ENCODE measurements at regions of chr5 and their contacts with region 1.

Region 1: GRCh38 chr5:105730982-105731381 is 1939.8 kb downstream of the EFNA5 start:
- DNase-seq: no peak
- H3K4me3 ChIP-seq: no peak overlapping the region
- H3K27ac ChIP-seq: no peak overlapping the region
- H3K4me1 ChIP-seq: no peaks in the 10 kb centered on the region
- H3K27me3 ChIP-seq: no peaks in the 10 kb centered on the region
- CTCF ChIP-seq: no peak
- POLR2A ChIP-seq: no peak

Region 2: DNA sequence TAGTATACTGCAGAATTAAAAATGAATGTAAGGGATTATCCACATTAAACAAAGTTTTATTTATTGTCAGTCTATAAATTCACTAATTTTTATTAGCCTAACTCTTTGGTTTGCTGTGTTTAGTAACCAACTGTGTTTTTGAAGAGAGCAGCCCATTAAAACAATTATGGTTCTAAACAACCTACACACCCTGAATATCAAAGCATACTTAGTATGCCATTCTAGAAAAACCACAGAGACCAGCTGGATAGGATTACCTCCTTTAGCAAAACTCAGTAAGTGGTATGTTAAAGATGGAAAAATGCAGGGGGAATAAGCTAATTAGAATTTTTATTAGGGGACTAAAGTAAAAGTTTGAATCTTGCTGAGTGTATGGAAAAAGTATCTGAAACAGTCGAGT is 186.7 kb before region 1 on chr5:
- intact Hi-C with region 1: no loop called
- DNase-seq: no peak
- H3K4me3 ChIP-seq: no peak overlapping the region
- H3K27ac ChIP-seq: no peak overlapping the region
- H3K4me1 ChIP-seq: no peaks in the 10 kb centered on the region
- H3K27me3 ChIP-seq: no peaks in the 10 kb centered on the region
- CTCF ChIP-seq: no peak
- POLR2A ChIP-seq: no peak

Region 3: DNA sequence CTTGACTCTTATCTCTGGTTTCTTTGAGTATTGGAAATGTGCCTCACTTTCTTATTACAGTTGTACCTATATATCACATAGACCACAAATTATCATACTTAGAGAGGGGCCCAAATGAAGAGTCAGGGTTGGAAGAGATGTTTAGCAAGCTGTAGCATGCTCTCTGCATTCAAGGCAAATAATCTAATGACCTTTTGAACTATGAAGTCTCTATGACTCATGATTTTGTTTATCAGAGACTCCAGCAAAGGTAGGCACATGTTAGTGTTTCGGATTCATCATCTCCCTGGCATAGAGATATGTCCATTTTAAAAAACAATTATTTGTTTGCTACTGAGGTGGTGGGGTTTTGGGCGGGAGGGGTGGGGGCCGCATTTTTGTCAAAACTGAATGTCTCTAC is 60.4 kb before region 1 on chr5:
- intact Hi-C with region 1: loop called (anchors 2 kb)
- DNase-seq: no peak
- H3K4me3 ChIP-seq: no peak overlapping the region
- H3K27ac ChIP-seq: no peak overlapping the region
- H3K4me1 ChIP-seq: no peaks in the 10 kb centered on the region
- H3K27me3 ChIP-seq: no peaks in the 10 kb centered on the region
- CTCF ChIP-seq: no peak
- POLR2A ChIP-seq: no peak